Vagina (tissue), 2 donors: ENCODE measurements at regions of chr3 and their contacts with region 1.

Region 1: DNA sequence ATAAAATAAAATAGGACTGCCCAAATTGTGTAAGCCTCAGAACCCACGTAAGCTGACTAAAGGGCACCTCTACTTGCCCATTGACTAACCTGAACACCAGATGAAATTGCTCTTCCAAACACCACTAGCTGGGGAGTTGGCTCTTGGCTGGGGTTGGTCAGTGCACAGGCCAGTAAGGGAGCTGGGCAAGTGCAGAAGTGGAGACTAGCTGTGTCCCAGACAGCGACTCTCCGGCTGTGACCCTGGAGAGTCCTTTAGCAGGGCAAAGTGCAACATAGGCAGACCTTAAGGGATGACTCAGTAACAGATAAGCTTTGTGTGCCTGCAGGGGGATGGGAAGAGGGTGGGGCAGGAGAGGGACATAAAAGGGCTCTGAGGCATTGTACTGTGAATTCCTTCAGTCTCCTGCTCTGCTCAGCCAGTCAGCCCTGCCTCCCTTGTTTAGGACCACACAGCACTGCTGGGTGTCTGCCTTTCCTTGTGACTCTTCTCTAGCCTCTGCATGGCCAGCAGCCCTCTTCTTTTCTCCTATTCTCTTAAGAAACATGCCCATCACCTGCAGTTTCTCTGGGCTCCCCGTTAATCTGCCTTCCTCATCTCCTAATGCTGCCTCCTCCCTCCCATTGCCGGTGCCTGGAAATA is 13.2 kb downstream of the NR1I2 start:
- DNase-seq: no peak
- H3K4me3 ChIP-seq: no peak overlapping the region
- H3K27ac ChIP-seq: no peak overlapping the region
- H3K4me1 ChIP-seq: no peaks in the 10 kb centered on the region
- H3K27me3 ChIP-seq: no peaks in the 10 kb centered on the region
- CTCF ChIP-seq: no peak
- POLR2A ChIP-seq: no peak

Region 2: DNA sequence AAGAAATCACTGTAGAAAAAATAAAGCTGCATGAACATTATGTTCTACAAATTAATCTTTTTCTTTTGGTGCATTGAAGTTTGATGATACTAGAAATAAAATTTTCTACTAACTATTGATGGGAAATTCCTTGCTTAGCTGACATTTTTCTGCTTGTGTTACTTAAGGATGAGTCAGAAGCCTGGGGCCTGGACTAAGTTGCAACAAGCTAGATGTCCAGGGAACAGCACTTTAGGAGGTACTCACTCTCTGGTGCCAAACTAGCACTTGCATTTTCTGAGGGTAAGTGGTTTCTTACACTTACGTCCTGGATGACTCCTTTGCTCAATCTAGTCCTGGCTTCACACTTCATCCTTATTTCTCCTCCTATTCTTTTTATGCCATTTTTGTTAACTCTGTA is 1705.5 kb before region 1 on chr3:
- intact Hi-C with region 1: loop called (anchors 5 kb)
- DNase-seq: no peak
- H3K4me3 ChIP-seq: no peak overlapping the region
- H3K27ac ChIP-seq: no peak overlapping the region
- H3K4me1 ChIP-seq: no peaks in the 10 kb centered on the region
- H3K27me3 ChIP-seq: no peaks in the 10 kb centered on the region
- CTCF ChIP-seq: no peak
- POLR2A ChIP-seq: no peak

Region 3: GRCh38 chr3:119810018-119810435 is 14.9 kb after region 1 on chr3:
- intact Hi-C with region 1: no loop called
- DNase-seq: no peak
- H3K4me3 ChIP-seq: peak overlapping the region; percentile 47 to 54
- H3K27ac ChIP-seq: no peak overlapping the region
- H3K4me1 ChIP-seq: peaks cover 9% of the 10 kb centered on the region
- H3K27me3 ChIP-seq: no peaks in the 10 kb centered on the region
- CTCF ChIP-seq: no peak
- POLR2A ChIP-seq: no peak